Common myeloid progenitor, CD34-positive (primary cell): ENCODE measurements at regions of chr2 and their contacts with region 1.

Region 1: GRCh38 chr2:119826370-119826961 is 66.7 kb downstream of the PTPN4 start:
- DNase-seq: peak; percentile 59 to 76 (median 69)
- H3K4me3 ChIP-seq: no peak overlapping the region
- H3K27ac ChIP-seq: no peak overlapping the region
- H3K4me1 ChIP-seq: peaks cover 0 to 3% (median 0%) of the 10 kb centered on the region in 4 experiments
- H3K27me3 ChIP-seq: no peaks in the 10 kb centered on the region

Region 2: GRCh38 chr2:119702918-119703401 is 123.5 kb before region 1 on chr2:
- CTCF ChIA-PET with region 1: interaction called, 12 read pairs
- POLR2A ChIA-PET with region 1: no interaction called
- DNase-seq: peak; percentile 50 to 64 (median 58)
- H3K4me3 ChIP-seq: no peak overlapping the region
- H3K27ac ChIP-seq: no peak overlapping the region
- H3K4me1 ChIP-seq: peaks cover 0 to 3% (median under 1%) of the 10 kb centered on the region in 4 experiments
- H3K27me3 ChIP-seq: peaks cover 0 to 2% (median 0%) of the 10 kb centered on the region in 5 experiments

Region 3: DNA sequence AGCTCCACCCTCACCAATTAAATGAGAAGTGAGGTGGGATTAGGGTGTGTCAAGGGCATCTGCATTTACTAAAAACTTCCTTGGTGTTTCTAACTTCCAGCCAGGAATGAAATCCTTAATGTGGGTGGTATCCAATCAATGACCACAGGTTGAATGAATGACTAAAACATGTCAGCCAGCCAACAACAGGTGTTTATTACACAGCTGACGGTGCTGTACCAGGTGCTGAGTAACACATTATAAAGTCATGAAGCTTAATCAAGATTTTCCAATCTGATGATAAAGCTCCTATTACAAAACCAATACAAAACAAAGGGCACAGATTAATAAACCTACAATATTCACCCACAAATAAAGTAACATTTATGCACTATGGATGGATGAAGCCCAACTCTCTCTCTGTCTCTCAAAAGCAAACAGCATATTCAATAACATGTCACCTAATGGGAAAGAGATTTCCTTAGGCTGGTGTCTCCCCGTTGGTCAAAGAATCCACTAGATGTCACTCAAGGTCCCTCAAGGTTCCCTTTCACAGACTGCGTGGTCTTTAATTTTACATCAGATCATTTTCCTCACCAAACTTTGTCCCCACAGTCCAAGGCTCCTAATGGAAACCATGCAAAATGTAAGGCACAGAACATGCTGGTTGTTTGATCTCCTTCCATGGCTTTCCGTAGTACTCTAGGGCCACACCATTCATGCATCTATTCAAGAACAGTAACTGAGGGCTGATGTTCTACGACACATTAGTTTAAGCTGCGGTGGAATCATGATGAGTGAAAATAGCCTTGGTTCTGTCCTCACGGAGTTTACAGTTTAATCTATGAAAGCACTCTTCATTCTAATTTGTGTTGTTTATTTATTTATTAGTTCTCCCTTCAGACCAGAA is 73.2 kb before region 1 on chr2:
- CTCF ChIA-PET with region 1: interaction called, 98 read pairs
- POLR2A ChIA-PET with region 1: no interaction called
- DNase-seq: peak; percentile 59 to 77 (median 71)
- H3K4me3 ChIP-seq: no peak overlapping the region
- H3K27ac ChIP-seq: no peak overlapping the region
- H3K4me1 ChIP-seq: peaks cover 0 to 7% (median 1%) of the 10 kb centered on the region in 4 experiments
- H3K27me3 ChIP-seq: peaks cover 0 to 3% (median 0%) of the 10 kb centered on the region in 5 experiments

Region 4: DNA sequence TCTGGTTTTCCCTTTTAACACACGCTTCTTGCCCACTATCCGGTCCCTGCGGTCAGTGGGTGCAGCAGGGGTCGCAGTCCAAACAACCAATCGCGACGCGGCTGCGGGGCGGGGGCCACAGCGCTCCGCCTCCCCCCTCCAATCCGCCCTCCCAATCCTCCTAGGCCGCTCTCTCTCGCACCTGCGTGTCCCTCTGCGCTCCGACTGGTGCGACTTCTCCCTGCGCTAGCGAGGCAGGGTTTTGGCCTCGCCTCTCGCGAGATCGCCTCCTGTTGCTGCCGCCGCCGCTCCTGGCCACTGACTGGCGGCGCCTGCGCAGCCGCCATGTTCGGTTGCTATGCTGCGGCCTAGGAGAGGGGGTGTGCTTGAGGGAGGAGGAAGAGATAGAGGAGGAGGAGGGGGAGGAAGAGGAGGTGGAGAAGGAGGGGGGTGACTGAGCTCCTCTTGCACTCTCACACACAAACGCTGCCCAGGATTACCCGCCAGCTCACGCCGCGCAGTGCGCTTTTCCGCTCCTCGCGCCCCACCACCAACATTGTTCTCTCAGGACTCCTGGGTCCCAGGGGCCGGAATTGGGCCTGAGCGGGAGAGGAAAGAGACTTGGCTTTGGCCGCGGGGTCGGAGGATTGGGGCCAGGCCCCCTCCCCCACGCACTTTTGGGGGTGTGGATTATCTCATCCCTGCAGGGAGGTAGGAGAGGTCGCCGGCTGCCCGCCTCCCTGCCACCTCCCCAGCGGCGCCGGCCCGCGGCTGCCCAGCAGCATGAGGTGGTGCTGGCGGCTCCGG is 66.8 kb before region 1 on chr2 and contains the start of gene PTPN4:
- CTCF ChIA-PET with region 1: interaction called, 98 read pairs
- POLR2A ChIA-PET with region 1: no interaction called
- DNase-seq: peak; percentile 99 to 100 (median 99)
- H3K4me3 ChIP-seq: peak within 1 kb of the TSS; percentile 66 to 97 (median 91)
- H3K27ac ChIP-seq: peak within 1 kb of the TSS; percentile 83 to 90
- H3K4me1 ChIP-seq: peaks cover 12 to 38% (median 22%) of the 10 kb centered on the region in 4 experiments
- H3K27me3 ChIP-seq: no peaks in the 10 kb centered on the region

Region 5: DNA sequence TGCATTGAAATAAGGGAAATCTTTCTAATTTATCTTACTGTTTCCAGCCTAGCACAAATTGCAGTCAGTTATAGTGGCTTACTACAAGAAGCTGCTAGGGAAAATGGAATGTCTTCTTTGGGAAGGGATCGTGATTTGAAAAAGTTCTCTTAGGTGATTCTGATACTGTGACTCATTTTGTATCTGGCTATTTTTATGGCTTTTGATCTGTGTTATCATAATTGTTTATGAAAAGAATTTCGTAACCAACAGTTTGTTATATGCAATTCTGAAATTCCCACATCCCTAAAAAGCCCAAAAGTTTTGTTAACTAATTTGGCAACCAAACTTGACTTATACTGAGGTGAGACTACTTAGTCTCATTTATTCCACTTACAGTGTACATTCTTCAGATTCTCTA is 54.3 kb before region 1 on chr2:
- CTCF ChIA-PET with region 1: no interaction called
- POLR2A ChIA-PET with region 1: no interaction called
- DNase-seq: no peak
- H3K4me3 ChIP-seq: no peak overlapping the region
- H3K27ac ChIP-seq: no peak overlapping the region
- H3K4me1 ChIP-seq: no peaks in the 10 kb centered on the region
- H3K27me3 ChIP-seq: no peaks in the 10 kb centered on the region

Region 6: GRCh38 chr2:119838179-119838578 is 11.7 kb after region 1 on chr2:
- CTCF ChIA-PET with region 1: interaction called, 18 read pairs
- POLR2A ChIA-PET with region 1: no interaction called
- DNase-seq: peak in 1 of 3 donors; percentile 18
- H3K4me3 ChIP-seq: no peak overlapping the region
- H3K27ac ChIP-seq: no peak overlapping the region
- H3K4me1 ChIP-seq: peaks cover 0 to 9% (median under 1%) of the 10 kb centered on the region in 4 experiments
- H3K27me3 ChIP-seq: no peaks in the 10 kb centered on the region

Region 7: DNA sequence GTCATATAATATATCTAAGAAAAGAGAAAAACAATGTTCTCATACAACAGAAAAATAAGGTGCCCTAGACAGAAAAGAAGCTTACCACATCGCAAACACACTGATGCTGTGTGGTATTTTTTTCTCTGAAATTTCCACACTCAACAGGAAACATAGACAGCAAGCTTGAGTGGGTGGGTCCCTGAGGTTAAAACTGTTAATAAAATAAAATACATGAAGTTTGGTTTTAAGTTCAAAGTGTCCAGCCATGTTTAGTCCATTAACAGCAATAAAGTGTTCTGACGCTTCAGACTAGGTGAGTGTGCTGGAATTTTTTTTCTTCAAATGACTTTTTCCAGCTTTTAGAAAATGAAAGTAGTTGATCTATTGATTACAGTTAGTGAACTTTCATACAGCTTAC is 103.1 kb after region 1 on chr2:
- CTCF ChIA-PET with region 1: no interaction called
- POLR2A ChIA-PET with region 1: no interaction called
- DNase-seq: peak in 2 of 3 donors; percentile 42 to 63
- H3K4me3 ChIP-seq: peak overlapping the region in 2 of 7 experiments; percentile 42 to 53
- H3K27ac ChIP-seq: peak overlapping the region in 1 of 2 experiments; percentile 72
- H3K4me1 ChIP-seq: peaks cover 0 to 17% (median 1%) of the 10 kb centered on the region in 4 experiments
- H3K27me3 ChIP-seq: no peaks in the 10 kb centered on the region